MCF 10A (cell line): ENCODE measurements at regions of chr1 and their contacts with region 1.

Region 1: DNA sequence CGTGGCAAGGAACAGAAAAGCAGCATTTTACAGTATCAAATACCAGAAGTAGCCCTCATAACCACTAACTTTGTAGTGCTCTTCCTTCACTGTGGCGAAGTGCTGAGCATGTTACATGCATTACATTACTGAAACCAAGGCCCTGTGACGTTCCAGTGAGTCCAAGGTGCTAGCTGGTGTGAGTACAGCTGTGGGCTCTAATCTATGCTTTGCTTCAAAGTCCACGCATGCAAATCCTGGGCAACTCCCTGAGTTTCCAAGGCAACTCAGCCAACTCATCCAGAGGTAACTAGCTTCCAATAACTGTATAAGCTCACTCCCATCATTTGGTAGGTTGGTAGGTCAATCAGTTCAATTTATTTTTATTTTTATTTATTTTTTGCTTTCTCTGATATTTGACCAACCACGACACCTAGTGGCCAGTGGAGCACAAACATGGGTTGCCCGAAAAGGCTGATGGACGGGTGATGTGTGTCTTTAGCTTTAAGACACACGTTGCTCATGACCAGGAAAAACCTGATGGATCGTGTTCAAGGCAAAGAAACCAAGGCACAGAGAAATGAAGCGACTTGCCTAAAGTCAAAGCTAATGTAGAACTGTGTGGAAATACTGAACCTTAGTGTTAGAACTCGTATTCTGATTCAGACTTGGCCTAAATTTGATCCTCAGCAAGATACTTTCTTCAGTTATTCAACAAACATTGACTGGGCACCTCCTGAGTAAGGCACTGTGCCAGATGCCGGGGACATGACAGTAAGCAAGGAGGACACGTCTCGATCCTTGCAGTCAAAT is 73.0 kb downstream of the GNG12 start:
- DNase-seq: peak; percentile 76
- H3K4me3 Mint-ChIP-seq: no peak overlapping the region
- H3K27ac Mint-ChIP-seq: peak overlapping the region; percentile 57
- H3K4me1 Mint-ChIP-seq: peaks cover 27% of the 10 kb centered on the region
- H3K27me3 Mint-ChIP-seq: no peaks in the 10 kb centered on the region
- CTCF ChIP-seq: peak; percentile 67

Region 2: DNA sequence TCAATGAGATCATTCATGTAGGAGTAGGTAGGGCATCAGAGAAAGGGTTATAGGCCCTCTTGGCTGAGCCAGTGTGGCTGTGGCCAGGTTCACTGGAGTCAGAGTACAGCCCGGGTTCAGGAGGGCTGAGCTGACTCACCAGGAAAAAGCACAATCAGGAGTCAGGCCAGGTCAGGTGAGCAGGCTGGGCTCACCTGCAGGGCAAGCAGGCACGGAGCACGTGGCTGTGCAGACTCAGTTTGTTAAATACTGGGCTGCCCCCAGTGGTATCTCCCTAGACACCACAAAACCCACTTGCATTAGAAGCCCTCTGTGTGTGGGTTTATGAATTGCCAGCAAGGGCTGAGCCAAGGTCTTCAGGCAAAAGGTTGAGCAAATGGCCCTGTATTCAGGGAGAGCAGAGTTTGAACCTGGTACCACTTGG is 207.9 kb before region 1 on chr1:
- CTCF ChIA-PET with region 1: interaction called, 32 read pairs
- POLR2A ChIA-PET with region 1: interaction called, 4 read pairs
- intact Hi-C with region 1: no loop called
- DNase-seq: peak; percentile 50
- H3K4me3 Mint-ChIP-seq: no peak overlapping the region
- H3K27ac Mint-ChIP-seq: no peak overlapping the region
- H3K4me1 Mint-ChIP-seq: peaks cover 6% of the 10 kb centered on the region
- H3K27me3 Mint-ChIP-seq: no peaks in the 10 kb centered on the region
- CTCF ChIP-seq: no peak

Region 3: DNA sequence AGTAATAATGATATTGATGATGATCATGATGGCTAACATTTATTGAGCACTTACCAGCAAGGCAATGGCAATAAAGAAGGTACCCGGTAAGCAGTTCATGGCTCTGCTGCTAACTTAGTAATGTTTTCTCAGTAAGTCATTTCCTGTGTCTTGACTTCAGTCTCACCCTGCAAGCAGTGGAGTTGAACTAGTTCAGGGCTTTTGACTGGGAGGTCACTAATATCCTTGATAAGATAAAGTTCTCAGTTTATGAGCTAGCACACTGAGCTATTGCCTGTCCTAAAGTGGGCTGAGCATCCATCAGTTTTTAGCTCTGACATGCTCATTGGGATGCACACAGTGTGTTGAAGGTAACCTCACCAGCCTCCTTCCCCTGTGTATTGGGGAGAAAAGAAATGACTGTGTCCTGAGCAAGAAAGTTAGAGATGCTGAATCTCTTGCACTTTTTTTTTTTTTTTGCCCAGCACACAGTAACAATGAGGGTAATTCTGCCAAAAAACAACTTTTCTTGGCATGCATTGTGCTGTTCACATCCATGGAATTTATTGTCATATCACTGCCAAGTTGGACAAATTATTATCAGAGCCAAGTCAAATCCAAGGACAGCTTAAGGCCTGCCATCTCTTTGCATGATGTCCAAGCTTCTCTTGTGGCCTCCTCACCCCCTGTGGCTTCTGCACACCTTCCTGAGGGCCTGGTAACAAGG is 130.7 kb before region 1 on chr1:
- CTCF ChIA-PET with region 1: interaction called, 13 read pairs
- POLR2A ChIA-PET with region 1: no interaction called
- intact Hi-C with region 1: no loop called
- DNase-seq: peak; percentile 71
- H3K4me3 Mint-ChIP-seq: no peak overlapping the region
- H3K27ac Mint-ChIP-seq: no peak overlapping the region
- H3K4me1 Mint-ChIP-seq: peaks cover 30% of the 10 kb centered on the region
- H3K27me3 Mint-ChIP-seq: no peaks in the 10 kb centered on the region
- CTCF ChIP-seq: no peak

Region 4: GRCh38 chr1:67713057-67713846 is 47.0 kb before region 1 on chr1:
- CTCF ChIA-PET with region 1: interaction called, 13 read pairs
- POLR2A ChIA-PET with region 1: interaction called, 6 read pairs
- intact Hi-C with region 1: no loop called
- DNase-seq: peak; percentile 85
- H3K4me3 Mint-ChIP-seq: no peak overlapping the region
- H3K27ac Mint-ChIP-seq: peak overlapping the region; percentile 87
- H3K4me1 Mint-ChIP-seq: peaks cover 52% of the 10 kb centered on the region
- H3K27me3 Mint-ChIP-seq: no peaks in the 10 kb centered on the region
- CTCF ChIP-seq: no peak

Region 5: GRCh38 chr1:67748630-67749029 is 11.6 kb before region 1 on chr1:
- CTCF ChIA-PET with region 1: interaction called, 32 read pairs
- POLR2A ChIA-PET with region 1: interaction called, 14 read pairs
- intact Hi-C with region 1: no loop called
- DNase-seq: peak; percentile 79
- H3K4me3 Mint-ChIP-seq: peak overlapping the region; percentile 65
- H3K27ac Mint-ChIP-seq: peak overlapping the region; percentile 89
- H3K4me1 Mint-ChIP-seq: peaks cover 58% of the 10 kb centered on the region
- H3K27me3 Mint-ChIP-seq: no peaks in the 10 kb centered on the region
- CTCF ChIP-seq: no peak